ENCODE measurements at regions of chr19 and their contacts with region 1.

Region 1: GRCh38 chr19:5622463-5623396 is at the starts of genes SAFB and SAFB2:
- DNase-seq: peak; percentile 100
- H3K4me3 Mint-ChIP-seq: peak within 1 kb of the TSS; percentile 100
- H3K27ac Mint-ChIP-seq: peak within 1 kb of the TSS; percentile 100
- H3K4me1 Mint-ChIP-seq: peaks cover 67% of the 10 kb centered on the region
- H3K27me3 Mint-ChIP-seq: peaks cover 3% of the 10 kb centered on the region
- total RNA-seq, gene SAFB: 103 to 113 TPM
- total RNA-seq, gene SAFB2: 63.5 to 76.4 TPM

Region 2: GRCh38 chr19:5345895-5346386 is 276.8 kb before region 1 on chr19:
- CTCF ChIA-PET with region 1: no interaction called
- POLR2A ChIA-PET with region 1: no interaction called
- intact Hi-C with region 1: no loop called
- DNase-seq: no peak
- H3K4me3 Mint-ChIP-seq: no peak overlapping the region
- H3K27ac Mint-ChIP-seq: no peak overlapping the region
- H3K4me1 Mint-ChIP-seq: peaks cover 5% of the 10 kb centered on the region
- H3K27me3 Mint-ChIP-seq: peaks cover 20% of the 10 kb centered on the region

Region 3: DNA sequence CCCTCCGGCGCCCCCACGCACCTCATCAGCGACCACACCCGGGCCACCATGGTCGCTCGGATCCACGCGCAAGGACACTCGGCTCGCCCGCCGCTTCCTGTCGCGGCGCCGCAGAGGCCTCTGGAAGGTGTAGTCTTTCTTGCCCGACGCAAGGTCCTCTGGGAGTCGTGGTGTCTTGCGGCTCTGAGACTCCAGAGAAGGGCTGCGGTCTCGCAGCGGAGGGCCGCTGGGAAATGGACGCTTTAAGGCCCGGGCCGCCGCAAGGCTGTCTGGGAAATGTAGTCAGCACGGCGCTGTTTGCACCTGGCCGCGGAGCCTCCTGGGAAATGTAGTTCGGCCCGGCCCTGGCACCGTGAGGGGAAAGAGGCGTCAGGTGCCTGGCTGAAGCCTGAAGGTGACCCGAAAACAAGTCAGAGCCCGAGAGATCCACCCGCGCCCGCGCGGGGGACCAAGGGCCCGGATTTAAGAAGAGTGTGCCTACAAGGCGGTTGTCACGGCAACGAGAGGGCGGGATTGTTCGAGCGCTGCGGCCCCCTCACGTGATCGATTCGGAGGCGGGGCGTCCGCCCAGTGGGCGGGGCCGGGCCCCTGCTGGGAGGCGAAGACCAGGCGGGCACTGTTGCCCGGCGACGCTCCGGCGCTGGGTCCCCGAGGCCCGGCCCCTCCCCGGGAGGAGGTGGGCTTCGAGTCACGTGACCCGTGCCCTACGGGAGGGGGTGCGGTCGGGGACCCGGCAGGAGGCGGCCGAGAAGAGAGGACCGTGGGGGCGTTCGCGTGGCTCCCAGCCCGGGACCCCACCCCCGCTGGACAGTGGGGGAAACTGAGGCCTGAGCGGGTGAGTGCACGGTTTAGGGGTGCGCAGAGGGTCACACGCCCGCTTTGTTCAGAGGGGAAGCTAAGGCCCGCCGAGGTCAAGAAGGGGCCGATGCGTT is 58.0 kb after region 1 on chr19 and contains the starts of genes HSD11B1L and MICOS13:
- CTCF ChIA-PET with region 1: no interaction called
- POLR2A ChIA-PET with region 1: interaction called, 5 read pairs
- intact Hi-C with region 1: loop called (anchors 1 kb)
- DNase-seq: peak; percentile 99
- H3K4me3 Mint-ChIP-seq: peak within 1 kb of the TSS; percentile 96
- H3K27ac Mint-ChIP-seq: peak within 1 kb of the TSS; percentile 89
- H3K4me1 Mint-ChIP-seq: peaks cover 17% of the 10 kb centered on the region
- H3K27me3 Mint-ChIP-seq: no peaks in the 10 kb centered on the region
- total RNA-seq, gene HSD11B1L: 3.8 to 4.1 TPM
- total RNA-seq, gene MICOS13: 50.9 to 55.3 TPM